CD4-positive, alpha-beta T cell (primary cell): ENCODE measurements at regions of chr5 and their contacts with region 1.

Region 1: DNA sequence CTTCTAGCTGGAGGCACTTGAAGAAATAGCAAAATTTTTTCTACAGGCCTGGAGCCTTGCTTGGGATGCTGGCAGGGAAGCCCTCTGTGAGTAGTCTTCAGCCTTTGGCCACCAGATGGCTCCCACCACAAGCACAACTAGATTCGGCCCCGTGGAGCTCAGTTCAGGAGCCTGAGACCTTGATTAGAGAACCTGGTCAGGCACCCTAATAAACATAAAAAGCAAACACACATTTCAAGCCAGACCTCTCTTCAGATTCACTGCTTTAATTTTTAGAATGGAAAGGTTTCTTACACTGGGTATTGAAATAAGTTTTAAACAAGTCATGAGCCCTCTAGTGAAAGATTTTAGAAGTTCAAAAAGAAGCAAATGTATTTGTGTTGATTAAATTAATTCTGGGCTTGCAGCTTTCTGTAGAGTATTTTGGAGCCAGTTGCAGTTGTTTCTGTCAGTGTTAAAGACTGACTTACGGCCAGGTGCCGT is 41.4 kb downstream of the GLRX start:
- DNase-seq: peak; percentile 57 to 87 (median 66)
- ATAC-seq: peak; percentile 94
- H3K4me3 ChIP-seq: no peak overlapping the region
- H3K4me3 Mint-ChIP-seq: peak overlapping the region; percentile 68
- H3K27ac ChIP-seq: no peak overlapping the region
- H3K27ac Mint-ChIP-seq: peak overlapping the region; percentile 26
- H3K4me1 ChIP-seq: no peaks in the 10 kb centered on the region
- H3K4me1 Mint-ChIP-seq: peaks cover 5% of the 10 kb centered on the region
- H3K27me3 ChIP-seq: no peaks in the 10 kb centered on the region
- H3K27me3 Mint-ChIP-seq: no peaks in the 10 kb centered on the region
- CTCF ChIP-seq: peak; percentile 100

Region 2: DNA sequence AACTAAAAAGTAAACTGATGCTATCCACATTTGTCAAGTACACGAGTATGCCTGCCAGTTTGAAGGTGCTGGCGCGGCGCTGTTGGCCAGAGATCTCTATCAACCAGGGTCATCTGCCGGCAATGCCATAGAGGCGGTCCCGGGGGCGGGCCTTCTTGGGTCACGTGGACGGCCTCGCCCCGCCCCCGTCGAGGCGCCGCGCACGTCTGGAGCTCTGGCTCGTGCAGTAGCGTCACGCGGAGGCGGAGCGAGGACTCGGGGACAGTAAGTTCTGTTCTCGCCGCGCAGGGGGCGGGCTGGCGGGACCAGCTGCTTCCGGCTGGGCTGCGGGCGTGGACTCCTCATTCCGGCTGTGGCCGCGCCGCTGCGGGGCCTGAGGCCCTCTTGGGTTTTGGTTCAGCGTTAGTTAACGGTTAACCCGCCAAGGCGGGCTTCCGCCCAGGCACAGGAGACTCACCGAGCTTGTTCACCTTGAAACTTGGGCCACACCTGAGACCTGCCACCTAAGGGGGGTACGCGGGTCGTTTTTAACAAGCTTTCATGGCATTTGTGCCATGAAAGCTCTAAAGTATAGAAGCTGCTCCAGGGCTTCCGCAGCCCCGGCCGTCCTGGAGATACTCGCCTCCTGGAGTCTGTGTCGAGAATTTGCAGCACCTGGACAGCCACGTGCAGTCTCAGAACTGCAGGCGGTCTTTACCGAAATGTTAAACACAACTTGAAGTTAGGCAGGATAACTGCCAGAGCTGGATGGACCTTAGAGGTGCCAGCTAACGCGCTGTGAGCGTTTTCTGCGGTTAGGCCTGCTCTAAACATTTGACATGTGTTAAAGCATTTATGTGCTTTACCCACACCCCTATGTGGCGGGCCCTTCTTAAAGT is 134.3 kb before region 1 on chr5 and contains the start of gene RFESD:
- CTCF ChIA-PET with region 1: interaction called, 14 read pairs
- POLR2A ChIA-PET with region 1: interaction called, 7 read pairs
- intact Hi-C with region 1: loop called in 1 of 2 experiments (anchors 2 kb)
- DNase-seq: peak; percentile 82 to 97 (median 90)
- ATAC-seq: peak; percentile 92
- H3K4me3 ChIP-seq: peak within 1 kb of the TSS; percentile 74
- H3K4me3 Mint-ChIP-seq: peak within 1 kb of the TSS; percentile 88
- H3K27ac ChIP-seq: peak within 1 kb of the TSS; percentile 71 to 74
- H3K27ac Mint-ChIP-seq: peak within 1 kb of the TSS; percentile 68
- H3K4me1 ChIP-seq: peaks cover 18% of the 10 kb centered on the region
- H3K4me1 Mint-ChIP-seq: peaks cover 51% of the 10 kb centered on the region
- H3K27me3 ChIP-seq: no peaks in the 10 kb centered on the region
- H3K27me3 Mint-ChIP-seq: no peaks in the 10 kb centered on the region
- CTCF ChIP-seq: no peak
- total RNA-seq, gene RFESD: 1.3 to 1.5 TPM

Region 3: DNA sequence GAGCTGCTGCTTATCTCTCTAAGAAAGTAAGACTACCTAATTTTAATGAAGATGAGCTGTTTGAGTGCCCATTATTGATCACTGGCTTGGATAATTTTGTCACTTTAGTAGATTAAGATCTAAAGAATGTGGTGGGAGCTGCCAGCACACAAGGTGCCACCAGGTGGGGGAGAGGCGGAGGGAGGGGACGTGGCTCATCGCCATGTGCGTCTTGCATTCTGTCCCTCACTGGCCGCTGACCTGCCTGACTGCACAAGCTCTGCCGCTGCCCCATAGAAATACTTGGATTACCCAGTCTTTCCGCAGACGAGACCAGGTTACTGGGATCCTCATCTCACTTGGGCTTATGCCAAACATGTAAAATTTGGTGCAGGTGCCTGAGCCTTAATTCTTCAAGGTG is 12.4 kb before region 1 on chr5:
- CTCF ChIA-PET with region 1: interaction called, 10 read pairs
- POLR2A ChIA-PET with region 1: no interaction called
- intact Hi-C with region 1: no loop called
- DNase-seq: no peak
- ATAC-seq: no peak
- H3K4me3 ChIP-seq: no peak overlapping the region
- H3K4me3 Mint-ChIP-seq: no peak overlapping the region
- H3K27ac ChIP-seq: no peak overlapping the region
- H3K27ac Mint-ChIP-seq: no peak overlapping the region
- H3K4me1 ChIP-seq: no peaks in the 10 kb centered on the region
- H3K4me1 Mint-ChIP-seq: no peaks in the 10 kb centered on the region
- H3K27me3 ChIP-seq: no peaks in the 10 kb centered on the region
- H3K27me3 Mint-ChIP-seq: no peaks in the 10 kb centered on the region
- CTCF ChIP-seq: no peak

Region 4: GRCh38 chr5:95822542-95823181 is 41.5 kb after region 1 on chr5 and contains the start of gene GLRX:
- CTCF ChIA-PET with region 1: interaction called, 51 read pairs
- POLR2A ChIA-PET with region 1: interaction called, 25 read pairs
- intact Hi-C with region 1: no loop called
- DNase-seq: peak; percentile 22 to 76 (median 50)
- ATAC-seq: peak; percentile 39
- H3K4me3 ChIP-seq: peak within 1 kb of the TSS; percentile 84
- H3K4me3 Mint-ChIP-seq: peak within 1 kb of the TSS; percentile 98
- H3K27ac ChIP-seq: peak within 1 kb of the TSS; percentile 84 to 86
- H3K27ac Mint-ChIP-seq: peak within 1 kb of the TSS; percentile 83
- H3K4me1 ChIP-seq: peaks cover 64% of the 10 kb centered on the region
- H3K4me1 Mint-ChIP-seq: peaks cover 73% of the 10 kb centered on the region
- H3K27me3 ChIP-seq: no peaks in the 10 kb centered on the region
- H3K27me3 Mint-ChIP-seq: no peaks in the 10 kb centered on the region
- CTCF ChIP-seq: no peak
- total RNA-seq, gene GLRX: 16.9 to 18.7 TPM

Region 5: GRCh38 chr5:95853490-95853889 is 72.3 kb after region 1 on chr5:
- CTCF ChIA-PET with region 1: interaction called, 79 read pairs
- POLR2A ChIA-PET with region 1: interaction called, 16 read pairs
- intact Hi-C with region 1: no loop called
- DNase-seq: no peak
- ATAC-seq: no peak
- H3K4me3 ChIP-seq: no peak overlapping the region
- H3K4me3 Mint-ChIP-seq: no peak overlapping the region
- H3K27ac ChIP-seq: no peak overlapping the region
- H3K27ac Mint-ChIP-seq: no peak overlapping the region
- H3K4me1 ChIP-seq: peaks cover 2% of the 10 kb centered on the region
- H3K4me1 Mint-ChIP-seq: peaks cover 5% of the 10 kb centered on the region
- H3K27me3 ChIP-seq: no peaks in the 10 kb centered on the region
- H3K27me3 Mint-ChIP-seq: no peaks in the 10 kb centered on the region
- CTCF ChIP-seq: no peak

Region 6: GRCh38 chr5:96336351-96336985 is 555.3 kb after region 1 on chr5:
- CTCF ChIA-PET with region 1: interaction called, 6 read pairs
- POLR2A ChIA-PET with region 1: no interaction called
- intact Hi-C with region 1: loop called (anchors 2 to 5 kb)
- DNase-seq: peak in 13 of 14 experiments; percentile 16 to 83 (median 48)
- ATAC-seq: peak; percentile 95
- H3K4me3 ChIP-seq: no peak overlapping the region
- H3K4me3 Mint-ChIP-seq: no peak overlapping the region
- H3K27ac ChIP-seq: no peak overlapping the region
- H3K27ac Mint-ChIP-seq: no peak overlapping the region
- H3K4me1 ChIP-seq: no peaks in the 10 kb centered on the region
- H3K4me1 Mint-ChIP-seq: no peaks in the 10 kb centered on the region
- H3K27me3 ChIP-seq: no peaks in the 10 kb centered on the region
- H3K27me3 Mint-ChIP-seq: peaks cover 19% of the 10 kb centered on the region
- CTCF ChIP-seq: peak; percentile 81